ENCODE measurements at regions of chr5 and their contacts with region 1.

Region 1: GRCh38 chr5:180470966-180471582 is 23.1 kb upstream of the CNOT6 start:
- DNase-seq: peak in 1 of 2 donors; percentile 55
- ATAC-seq: peak in 7 of 8 donors; percentile 60 to 85 (median 76)
- H3K4me3 ChIP-seq: no peak overlapping the region
- H3K27ac ChIP-seq: no peak overlapping the region
- H3K4me1 ChIP-seq: peaks cover 0 to 18% (median 0%) of the 10 kb centered on the region in 9 donors
- H3K27me3 ChIP-seq: peaks cover 0 to 27% (median 16%) of the 10 kb centered on the region in 7 donors
- CTCF ChIP-seq: peak; percentile 77 to 96 (median 93)

Region 2: GRCh38 chr5:180126726-180127681 is 344.1 kb before region 1 on chr5:
- intact Hi-C with region 1: loop called in 6 of 10 experiments (anchors 5 to 10 kb)
- DNase-seq: peak in 1 of 2 donors; percentile 42
- ATAC-seq: peak in 6 of 8 donors; percentile 27 to 71 (median 46)
- H3K4me3 ChIP-seq: no peak overlapping the region
- H3K27ac ChIP-seq: no peak overlapping the region
- H3K4me1 ChIP-seq: peaks cover 0 to 6% (median 0%) of the 10 kb centered on the region in 9 donors
- H3K27me3 ChIP-seq: peaks cover 0 to 43% (median 30%) of the 10 kb centered on the region in 7 donors
- CTCF ChIP-seq: peak; percentile 65 to 94 (median 77)

Region 3: DNA sequence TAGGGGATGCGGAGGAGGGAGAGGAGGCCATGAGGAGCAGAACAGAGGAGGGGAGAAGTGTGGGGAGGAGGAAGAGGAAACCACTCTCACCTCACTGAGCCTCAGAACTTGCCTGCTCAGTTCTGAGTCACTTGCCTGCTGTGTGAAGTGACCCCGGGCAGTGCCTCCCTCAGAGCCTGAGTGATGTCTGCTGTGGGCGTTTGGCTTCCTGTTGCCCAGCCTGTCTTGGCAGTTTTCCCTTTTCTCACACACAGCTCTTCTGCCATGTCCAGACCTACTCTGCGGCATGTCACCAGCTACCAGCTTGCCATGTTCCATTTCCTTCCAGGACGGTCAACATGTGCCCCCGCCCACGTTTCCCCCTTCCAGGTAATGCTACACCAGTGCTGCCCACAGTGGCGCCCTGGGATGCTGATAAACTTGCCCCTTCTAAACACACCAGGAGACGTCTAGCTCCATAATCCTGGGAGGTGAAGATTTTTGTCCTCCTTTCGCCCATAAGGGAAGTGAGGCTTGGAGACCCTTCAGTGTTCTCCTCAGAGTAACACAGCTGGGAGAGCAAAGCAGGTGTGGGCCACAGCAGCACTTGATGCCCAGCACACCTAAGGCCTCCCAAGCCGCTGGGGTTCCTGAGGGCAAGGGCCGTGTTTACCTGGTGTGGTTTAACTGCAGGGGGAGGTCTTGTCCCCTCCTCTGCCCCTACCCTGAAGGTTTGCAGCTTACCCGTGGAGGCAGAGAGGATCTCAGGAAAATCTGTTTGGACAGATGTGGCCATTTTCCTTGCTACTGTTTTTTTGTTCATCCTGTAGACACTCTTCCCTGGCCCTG is 335.7 kb before region 1 on chr5:
- intact Hi-C with region 1: loop called in 2 of 10 experiments (anchors 5 to 10 kb)
- DNase-seq: no peak
- ATAC-seq: peak in 2 of 8 donors; percentile 34 to 35
- H3K4me3 ChIP-seq: no peak overlapping the region
- H3K27ac ChIP-seq: peak overlapping the region in 1 of 10 donors; percentile 14
- H3K4me1 ChIP-seq: peaks cover 0 to 5% (median 0%) of the 10 kb centered on the region in 9 donors
- H3K27me3 ChIP-seq: peaks cover 0 to 25% (median 13%) of the 10 kb centered on the region in 7 donors
- CTCF ChIP-seq: no peak

Region 4: GRCh38 chr5:180433032-180433422 is 38.0 kb before region 1 on chr5:
- intact Hi-C with region 1: no loop called
- DNase-seq: no peak
- ATAC-seq: no peak
- H3K4me3 ChIP-seq: no peak overlapping the region
- H3K27ac ChIP-seq: no peak overlapping the region
- H3K4me1 ChIP-seq: no peaks in the 10 kb centered on the region
- H3K27me3 ChIP-seq: peaks cover 0 to 12% (median 0%) of the 10 kb centered on the region in 7 donors
- CTCF ChIP-seq: no peak

Region 5: DNA sequence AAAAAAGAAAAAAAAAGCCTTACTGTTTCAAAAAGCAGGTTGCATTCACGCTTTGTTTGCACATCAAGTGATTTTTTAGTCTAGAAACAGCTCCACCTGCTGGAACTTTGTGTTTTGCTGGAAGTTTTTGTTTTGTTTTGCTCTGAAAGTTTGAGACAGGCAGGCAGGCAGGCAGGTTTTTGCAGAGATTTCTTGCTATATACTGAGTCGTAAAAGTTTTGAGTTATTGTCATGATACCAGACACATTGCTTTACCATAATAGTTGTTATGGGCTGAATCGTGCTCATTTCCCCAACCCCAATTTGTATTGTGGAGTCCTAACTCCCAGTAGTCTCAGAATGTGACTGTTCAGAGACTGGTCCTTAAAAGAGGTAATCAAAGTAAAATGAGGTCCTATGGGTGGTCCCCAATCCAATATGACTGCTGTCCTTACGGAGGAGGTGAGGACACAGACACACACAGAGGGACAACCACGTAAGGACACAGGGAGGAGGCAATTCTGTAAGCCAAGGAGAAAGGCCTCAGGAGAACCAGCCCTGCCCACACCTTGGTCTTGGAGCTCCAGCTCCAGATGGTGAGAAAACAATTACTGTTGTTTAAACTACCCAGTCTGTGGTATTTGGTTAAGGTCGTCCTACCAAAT is 247.9 kb after region 1 on chr5:
- intact Hi-C with region 1: loop called in 1 of 10 experiments (anchors 5 kb)
- DNase-seq: no peak
- ATAC-seq: no peak
- H3K4me3 ChIP-seq: no peak overlapping the region
- H3K27ac ChIP-seq: no peak overlapping the region
- H3K4me1 ChIP-seq: no peaks in the 10 kb centered on the region
- H3K27me3 ChIP-seq: peaks cover 0 to 24% (median 13%) of the 10 kb centered on the region in 7 donors
- CTCF ChIP-seq: peak in 8 of 9 donors; percentile 12 to 68 (median 55)